RWPE1 (cell line): ENCODE measurements at regions of chr4 and their contacts with region 1.

Region 1: DNA sequence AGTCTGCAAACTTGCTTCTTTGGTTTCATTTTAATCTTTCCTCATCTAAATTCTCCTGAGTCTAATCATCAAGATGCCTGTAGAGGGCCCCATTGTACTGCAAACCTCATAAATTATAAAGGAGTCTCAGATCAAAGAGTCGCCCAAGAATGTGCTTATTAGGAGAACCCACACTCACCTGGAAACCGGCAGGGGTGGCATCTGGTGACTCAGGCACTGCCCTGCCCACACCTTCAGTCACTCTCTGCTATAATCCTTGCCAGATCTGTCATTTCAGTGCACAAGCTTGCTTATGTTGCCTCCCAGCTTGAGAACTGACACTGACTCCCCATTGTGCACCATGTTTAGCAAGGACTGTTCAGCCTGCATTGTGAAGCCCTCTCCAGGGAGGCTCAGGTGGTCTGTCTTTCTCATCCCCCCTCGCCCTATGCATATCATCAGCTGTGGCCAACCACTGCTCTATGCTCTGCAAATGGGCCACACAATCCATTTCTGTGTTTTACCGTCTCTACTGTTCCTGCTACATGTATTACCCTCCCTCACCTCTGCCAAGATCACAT is 12.4 kb downstream of the EPGN start:
- DNase-seq: peak; percentile 85
- H3K27ac ChIP-seq: peak overlapping the region; percentile 56
- CTCF ChIP-seq: peak; percentile 69

Region 2: GRCh38 chr4:74181219-74181618 is 139.4 kb before region 1 on chr4:
- CTCF ChIA-PET with region 1: no interaction called
- POLR2A ChIA-PET with region 1: no interaction called
- DNase-seq: no peak
- H3K27ac ChIP-seq: no peak overlapping the region
- CTCF ChIP-seq: no peak

Region 3: GRCh38 chr4:74364256-74364651 is 43.6 kb after region 1 on chr4:
- CTCF ChIA-PET with region 1: no interaction called
- POLR2A ChIA-PET with region 1: no interaction called
- DNase-seq: no peak
- H3K27ac ChIP-seq: peak overlapping the region; percentile 92
- CTCF ChIP-seq: no peak

Region 4: GRCh38 chr4:74675673-74676279 is 355.1 kb after region 1 on chr4:
- CTCF ChIA-PET with region 1: interaction called, 21 read pairs
- POLR2A ChIA-PET with region 1: no interaction called
- DNase-seq: peak; percentile 63
- H3K27ac ChIP-seq: no peak overlapping the region
- CTCF ChIP-seq: peak; percentile 89